T-cell (primary cell): ENCODE measurements at regions of chr9 and their contacts with region 1.

Region 1: DNA sequence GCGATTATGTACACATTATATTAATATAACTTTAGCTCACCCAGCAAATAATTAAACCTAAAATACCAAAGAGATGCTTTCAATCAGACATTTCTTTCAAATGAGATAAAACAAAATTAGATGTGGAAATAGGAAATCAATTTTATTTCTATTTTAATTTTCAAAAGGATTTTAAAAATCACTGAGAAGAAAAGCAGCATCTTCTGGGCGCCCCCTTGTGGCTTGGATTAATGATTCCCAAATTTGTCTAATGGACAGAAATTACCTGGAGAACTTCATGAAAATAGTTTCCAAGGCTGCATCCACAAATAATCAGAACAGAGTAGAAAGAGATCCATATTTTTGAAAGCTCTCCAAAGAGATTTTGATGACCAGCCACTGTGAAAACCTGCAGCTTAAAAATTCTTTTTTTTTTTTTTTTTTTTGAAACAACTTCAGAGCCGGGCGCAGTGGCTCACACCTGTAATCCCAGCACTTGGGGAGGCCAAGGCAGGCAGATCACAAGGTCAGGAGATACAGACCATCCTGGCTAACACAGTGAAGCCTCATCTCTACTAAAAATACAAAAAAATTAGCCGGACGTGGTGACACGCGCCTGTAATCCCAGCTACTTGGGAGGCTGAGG is 50.9 kb upstream of the CEMIP2 start:
- DNase-seq: peak in 26 of 35 experiments; percentile 9 to 78 (median 43)
- ATAC-seq: no peak
- H3K4me3 ChIP-seq: no peak overlapping the region
- H3K4me3 Mint-ChIP-seq: no peak overlapping the region
- H3K27ac ChIP-seq: no peak overlapping the region
- H3K27ac Mint-ChIP-seq: no peak overlapping the region
- H3K4me1 ChIP-seq: peaks cover 5% of the 10 kb centered on the region in 2 experiments
- H3K4me1 Mint-ChIP-seq: peaks cover 20 to 29% (median 20%) of the 10 kb centered on the region in 3 donors
- H3K27me3 ChIP-seq: no peaks in the 10 kb centered on the region
- H3K27me3 Mint-ChIP-seq: peaks cover 0 to 2% of the 10 kb centered on the region in 2 donors

Region 2: GRCh38 chr9:71210326-71210725 is 608.9 kb before region 1 on chr9:
- CTCF ChIA-PET with region 1: no interaction called
- POLR2A ChIA-PET with region 1: no interaction called
- DNase-seq: no peak
- ATAC-seq: no peak
- H3K4me3 ChIP-seq: no peak overlapping the region
- H3K4me3 Mint-ChIP-seq: no peak overlapping the region
- H3K27ac ChIP-seq: no peak overlapping the region
- H3K27ac Mint-ChIP-seq: no peak overlapping the region
- H3K4me1 ChIP-seq: no peaks in the 10 kb centered on the region
- H3K4me1 Mint-ChIP-seq: no peaks in the 10 kb centered on the region
- H3K27me3 ChIP-seq: no peaks in the 10 kb centered on the region
- H3K27me3 Mint-ChIP-seq: no peaks in the 10 kb centered on the region

Region 3: DNA sequence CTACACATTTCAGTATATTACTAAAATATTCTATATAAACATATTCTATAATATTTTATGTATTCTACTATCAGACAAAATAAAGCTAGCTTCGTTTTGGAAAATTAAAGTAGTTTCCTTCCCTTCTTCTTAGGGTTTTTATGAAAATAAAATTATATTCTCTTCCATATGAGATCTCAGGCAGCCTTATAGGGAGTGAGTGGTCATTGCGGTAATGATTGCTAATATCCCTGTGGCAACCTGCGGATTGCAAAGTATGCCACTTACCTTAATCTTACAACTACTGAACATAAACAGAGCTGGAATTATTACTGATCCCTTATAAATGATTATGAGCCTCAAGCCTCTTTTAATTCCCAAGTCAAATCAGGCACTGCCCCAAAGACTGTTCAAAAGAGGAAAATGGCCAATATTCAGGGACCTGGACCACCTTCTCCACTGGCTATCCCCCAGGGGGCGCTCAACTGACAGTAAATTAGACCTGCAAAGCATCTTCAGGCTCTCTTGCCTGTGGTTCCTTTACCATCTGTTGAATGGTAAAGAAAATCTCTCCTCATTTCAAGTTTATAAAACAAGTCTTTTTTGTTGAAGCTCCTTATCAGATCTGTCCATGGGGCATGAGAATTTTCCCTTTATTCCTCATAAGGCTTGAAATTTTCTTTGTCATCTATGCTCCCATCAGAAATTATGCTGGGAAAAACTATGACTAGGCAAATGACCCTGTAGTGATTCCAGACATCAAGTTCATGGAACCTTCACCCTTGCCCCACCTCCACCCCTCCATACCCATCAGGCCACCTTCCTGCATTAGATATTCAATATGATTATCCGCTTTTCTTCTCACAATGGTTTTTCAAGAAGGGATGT is 214.8 kb before region 1 on chr9:
- CTCF ChIA-PET with region 1: interaction called, 6 to 15 read pairs
- POLR2A ChIA-PET with region 1: interaction called in 1 of 2 experiments, 4 read pairs
- DNase-seq: peak; percentile 51 to 83 (median 75)
- ATAC-seq: peak; percentile 73 to 86 (median 75)
- H3K4me3 ChIP-seq: no peak overlapping the region
- H3K4me3 Mint-ChIP-seq: no peak overlapping the region
- H3K27ac ChIP-seq: no peak overlapping the region
- H3K27ac Mint-ChIP-seq: no peak overlapping the region
- H3K4me1 ChIP-seq: no peaks in the 10 kb centered on the region
- H3K4me1 Mint-ChIP-seq: no peaks in the 10 kb centered on the region
- H3K27me3 ChIP-seq: no peaks in the 10 kb centered on the region
- H3K27me3 Mint-ChIP-seq: no peaks in the 10 kb centered on the region

Region 4: DNA sequence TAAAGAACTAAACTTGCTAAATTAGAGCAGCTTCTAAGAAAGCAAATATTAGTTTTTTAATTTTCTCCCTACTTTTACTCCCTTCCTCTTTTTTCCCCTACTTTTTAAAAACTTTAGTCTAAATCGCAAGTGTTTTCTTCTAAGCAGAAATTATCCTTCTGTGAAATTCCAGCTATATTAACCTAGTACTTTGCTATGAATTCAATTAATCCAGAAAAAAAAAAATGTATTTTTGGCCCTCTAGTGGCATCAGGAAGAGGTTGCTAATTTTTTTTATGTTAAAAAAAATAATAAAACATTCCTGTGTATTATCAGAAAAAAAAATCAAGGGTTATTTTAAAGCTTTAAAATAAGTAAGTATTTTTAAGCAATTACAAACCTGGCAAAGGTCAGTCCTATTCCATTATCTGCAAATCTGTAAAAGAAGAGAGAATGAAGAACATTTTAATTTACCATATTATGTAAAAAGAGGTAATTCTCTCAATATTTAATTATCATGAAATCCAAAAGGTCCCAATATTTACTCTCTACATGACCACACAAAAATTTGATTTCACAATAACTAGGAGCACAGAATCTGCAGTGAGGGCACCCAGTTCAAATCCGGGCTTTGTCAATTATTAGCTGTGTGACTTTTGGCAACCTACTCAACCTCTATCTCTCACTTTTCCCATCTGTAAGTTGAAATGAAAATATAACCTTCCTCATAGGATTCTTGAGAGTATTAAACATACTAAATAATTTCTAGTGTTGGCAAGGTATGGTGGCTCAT is 102.9 kb before region 1 on chr9:
- CTCF ChIA-PET with region 1: interaction called, 3 to 10 read pairs
- POLR2A ChIA-PET with region 1: interaction called in 1 of 2 experiments, 3 read pairs
- DNase-seq: no peak
- ATAC-seq: no peak
- H3K4me3 ChIP-seq: no peak overlapping the region
- H3K4me3 Mint-ChIP-seq: no peak overlapping the region
- H3K27ac ChIP-seq: no peak overlapping the region
- H3K27ac Mint-ChIP-seq: no peak overlapping the region
- H3K4me1 ChIP-seq: no peaks in the 10 kb centered on the region
- H3K4me1 Mint-ChIP-seq: peaks cover 6 to 13% (median 7%) of the 10 kb centered on the region in 3 donors
- H3K27me3 ChIP-seq: no peaks in the 10 kb centered on the region
- H3K27me3 Mint-ChIP-seq: no peaks in the 10 kb centered on the region

Region 5: DNA sequence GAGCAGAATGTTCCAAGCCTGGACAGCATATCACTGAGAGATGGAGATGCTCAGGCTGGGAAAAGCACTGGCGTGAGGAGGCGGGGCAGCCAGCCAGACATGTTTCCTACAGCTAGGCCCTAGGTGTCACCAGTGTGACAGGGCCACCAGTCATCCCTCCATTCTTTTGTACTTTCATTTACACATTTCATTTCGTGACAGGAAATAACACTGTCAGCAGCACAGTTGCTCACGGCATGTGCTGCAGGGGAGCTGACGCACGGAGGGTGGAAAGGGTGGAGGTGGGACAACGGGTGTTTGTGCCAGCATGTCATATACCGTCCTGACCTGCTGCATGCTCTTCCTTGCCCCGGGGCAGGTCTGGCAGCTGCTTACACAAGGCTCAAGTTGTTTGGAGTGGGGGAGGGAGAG is 36.1 kb before region 1 on chr9:
- CTCF ChIA-PET with region 1: interaction called, 10 to 30 read pairs
- POLR2A ChIA-PET with region 1: interaction called, 4 to 9 read pairs
- DNase-seq: peak; percentile 67 to 97 (median 90)
- ATAC-seq: peak; percentile 91 to 96 (median 94)
- H3K4me3 ChIP-seq: no peak overlapping the region
- H3K4me3 Mint-ChIP-seq: peak overlapping the region; percentile 59 to 68 (median 62)
- H3K27ac ChIP-seq: peak overlapping the region; percentile 94
- H3K27ac Mint-ChIP-seq: peak overlapping the region; percentile 97 to 99
- H3K4me1 ChIP-seq: peaks cover 29 to 32% of the 10 kb centered on the region in 2 experiments
- H3K4me1 Mint-ChIP-seq: peaks cover 46 to 50% (median 47%) of the 10 kb centered on the region in 3 donors
- H3K27me3 ChIP-seq: no peaks in the 10 kb centered on the region
- H3K27me3 Mint-ChIP-seq: no peaks in the 10 kb centered on the region

Region 6: DNA sequence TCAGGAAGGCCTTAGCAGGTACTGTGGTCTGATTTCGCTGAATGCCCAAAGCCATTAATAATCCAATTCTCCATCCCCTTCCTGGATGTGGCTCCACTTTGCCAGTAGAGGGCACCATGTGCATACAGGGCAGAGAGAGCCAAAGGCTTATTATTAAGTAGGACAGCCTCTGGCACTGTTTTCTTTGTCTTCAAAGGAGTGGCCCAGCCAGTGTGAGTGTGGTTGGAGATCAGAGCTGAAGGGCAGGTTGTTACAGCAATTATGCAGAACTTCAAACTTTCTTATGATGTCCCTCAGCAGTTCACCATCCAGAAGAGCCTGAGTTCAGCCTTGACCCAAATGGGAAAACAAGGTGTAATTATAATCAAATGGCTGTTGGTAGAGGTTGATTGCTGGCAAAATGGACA is 12.3 kb before region 1 on chr9:
- CTCF ChIA-PET with region 1: interaction called, 6 to 12 read pairs
- POLR2A ChIA-PET with region 1: no interaction called
- DNase-seq: peak; percentile 23 to 77 (median 47)
- ATAC-seq: peak; percentile 74 to 93 (median 90)
- H3K4me3 ChIP-seq: no peak overlapping the region
- H3K4me3 Mint-ChIP-seq: no peak overlapping the region
- H3K27ac ChIP-seq: no peak overlapping the region
- H3K27ac Mint-ChIP-seq: peak overlapping the region; percentile 21 to 40
- H3K4me1 ChIP-seq: peaks cover 4 to 5% of the 10 kb centered on the region in 2 experiments
- H3K4me1 Mint-ChIP-seq: peaks cover 11 to 15% (median 13%) of the 10 kb centered on the region in 3 donors
- H3K27me3 ChIP-seq: no peaks in the 10 kb centered on the region
- H3K27me3 Mint-ChIP-seq: no peaks in the 10 kb centered on the region

Region 7: GRCh38 chr9:71975833-71976232 is 156.6 kb after region 1 on chr9:
- CTCF ChIA-PET with region 1: no interaction called
- POLR2A ChIA-PET with region 1: no interaction called
- DNase-seq: peak in 1 of 35 experiments; percentile 2
- ATAC-seq: no peak
- H3K4me3 ChIP-seq: no peak overlapping the region
- H3K4me3 Mint-ChIP-seq: no peak overlapping the region
- H3K27ac ChIP-seq: no peak overlapping the region
- H3K27ac Mint-ChIP-seq: no peak overlapping the region
- H3K4me1 ChIP-seq: no peaks in the 10 kb centered on the region
- H3K4me1 Mint-ChIP-seq: no peaks in the 10 kb centered on the region
- H3K27me3 ChIP-seq: no peaks in the 10 kb centered on the region
- H3K27me3 Mint-ChIP-seq: no peaks in the 10 kb centered on the region

Region 8: DNA sequence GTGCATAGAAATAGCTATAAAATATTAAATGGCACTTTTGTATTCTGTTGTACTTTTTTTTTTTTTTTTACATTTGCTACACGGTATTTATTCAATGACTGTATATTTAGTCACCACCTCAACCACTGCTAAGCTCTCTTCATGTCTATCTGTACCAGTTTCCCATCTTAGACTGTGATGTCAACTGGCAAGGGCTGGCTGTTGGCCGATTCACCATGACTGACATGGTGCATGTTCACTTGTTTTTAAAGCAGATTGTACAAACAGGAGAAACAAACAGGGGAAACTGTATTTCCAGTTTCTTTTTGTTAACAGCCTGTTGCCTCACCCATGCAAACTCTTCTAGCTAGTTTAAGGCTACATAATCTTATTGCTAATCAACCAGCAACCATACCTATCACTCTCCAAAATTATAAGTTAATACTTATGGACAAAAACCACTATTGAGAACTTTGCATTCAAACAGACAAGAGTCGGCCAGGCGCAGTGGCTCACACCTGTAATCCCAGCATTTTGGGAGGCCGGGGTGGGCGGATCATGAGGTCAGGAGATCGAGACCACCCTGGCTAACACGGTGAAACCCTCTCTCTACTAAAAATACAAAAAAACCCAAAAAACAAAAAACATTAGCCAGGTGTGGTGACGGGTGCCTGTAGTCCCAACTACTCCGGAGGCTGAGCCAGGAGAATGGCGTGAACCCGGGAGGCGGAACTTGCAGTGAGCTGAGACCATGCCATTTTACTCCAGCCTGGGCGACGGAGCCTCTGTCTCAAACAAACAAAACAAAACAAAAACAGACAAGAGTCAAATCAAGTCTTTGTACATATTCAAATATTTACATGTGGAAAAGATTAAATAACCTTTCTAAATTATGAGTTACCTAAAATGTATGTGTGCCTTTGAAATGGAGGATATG is 532.6 kb after region 1 on chr9:
- CTCF ChIA-PET with region 1: interaction called in 1 of 2 experiments, 11 read pairs
- POLR2A ChIA-PET with region 1: no interaction called
- DNase-seq: no peak
- ATAC-seq: no peak
- H3K4me3 ChIP-seq: no peak overlapping the region
- H3K4me3 Mint-ChIP-seq: no peak overlapping the region
- H3K27ac ChIP-seq: no peak overlapping the region
- H3K27ac Mint-ChIP-seq: peak overlapping the region in 1 of 2 donors; percentile 41
- H3K4me1 ChIP-seq: no peaks in the 10 kb centered on the region
- H3K4me1 Mint-ChIP-seq: peaks cover 15 to 21% (median 16%) of the 10 kb centered on the region in 3 donors
- H3K27me3 ChIP-seq: no peaks in the 10 kb centered on the region
- H3K27me3 Mint-ChIP-seq: no peaks in the 10 kb centered on the region